Activated B cell treated with CpG ODN at 0.5 μM for 24 hours (primary cell): ENCODE measurements at regions of chr5 and their contacts with region 1.

Region 1: DNA sequence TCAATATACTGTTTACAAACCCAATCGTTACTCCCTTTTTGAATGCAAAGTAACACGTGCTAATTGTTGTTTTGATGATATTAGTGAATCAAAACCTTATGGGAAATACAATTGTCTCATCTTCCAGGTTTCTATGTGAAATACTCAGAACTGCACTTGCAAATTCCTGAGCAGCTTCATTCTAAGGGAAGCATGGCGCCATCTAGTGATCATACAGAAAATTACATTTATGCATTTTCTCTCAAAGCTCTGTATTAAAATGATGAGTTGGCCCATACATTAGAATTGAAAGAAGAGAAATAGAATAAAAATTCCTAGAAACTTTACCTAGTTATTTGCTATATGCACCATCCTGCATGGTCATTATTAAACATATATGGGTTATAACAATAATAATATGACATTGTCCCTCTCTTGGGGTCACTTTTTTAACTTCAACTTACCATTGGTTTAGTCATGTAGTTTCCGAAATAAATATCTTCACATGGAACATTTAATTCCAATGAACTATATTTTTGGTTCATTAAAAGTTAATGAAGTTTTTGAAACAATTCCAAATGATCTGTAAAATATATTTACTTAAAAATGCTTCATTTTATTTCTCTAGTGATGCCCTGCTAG is 220.0 kb downstream of the PDE4D start:
- DNase-seq: no peak
- ATAC-seq: peak; percentile 28
- H3K4me3 Mint-ChIP-seq: no peak overlapping the region
- H3K27ac Mint-ChIP-seq: no peak overlapping the region
- H3K4me1 Mint-ChIP-seq: peaks cover 10% of the 10 kb centered on the region
- H3K27me3 Mint-ChIP-seq: no peaks in the 10 kb centered on the region
- CTCF ChIP-seq: peak; percentile 75

Region 2: GRCh38 chr5:59390074-59390659 is 283.4 kb before region 1 on chr5:
- CTCF ChIA-PET with region 1: interaction called, 50 read pairs
- POLR2A ChIA-PET with region 1: no interaction called
- intact Hi-C with region 1: loop called (anchors 1 kb)
- DNase-seq: no peak
- ATAC-seq: no peak
- H3K4me3 Mint-ChIP-seq: no peak overlapping the region
- H3K27ac Mint-ChIP-seq: no peak overlapping the region
- H3K4me1 Mint-ChIP-seq: peaks cover 14% of the 10 kb centered on the region
- H3K27me3 Mint-ChIP-seq: no peaks in the 10 kb centered on the region
- CTCF ChIP-seq: peak; percentile 75

Region 3: DNA sequence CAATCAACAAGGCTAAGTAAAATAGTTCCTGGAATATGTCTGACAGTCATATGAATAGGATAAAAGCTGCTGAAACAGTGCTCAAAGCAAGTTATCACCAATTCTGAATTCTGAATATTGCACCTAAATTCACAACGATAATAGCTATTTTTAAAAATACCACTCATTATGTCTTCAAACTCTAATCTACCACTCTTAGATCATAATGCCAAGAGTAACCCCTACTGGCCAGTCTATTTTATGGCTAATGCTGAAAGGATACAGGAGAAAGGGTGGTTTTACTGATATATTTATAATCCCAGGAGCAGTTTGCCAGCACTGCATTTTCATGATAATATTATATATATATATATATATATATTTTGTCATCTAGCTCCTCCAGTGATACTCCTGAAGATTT is 12.8 kb before region 1 on chr5:
- CTCF ChIA-PET with region 1: interaction called, 29 read pairs
- POLR2A ChIA-PET with region 1: interaction called, 3 read pairs
- intact Hi-C with region 1: no loop called
- DNase-seq: no peak
- ATAC-seq: peak; percentile 40
- H3K4me3 Mint-ChIP-seq: no peak overlapping the region
- H3K27ac Mint-ChIP-seq: no peak overlapping the region
- H3K4me1 Mint-ChIP-seq: peaks cover 47% of the 10 kb centered on the region
- H3K27me3 Mint-ChIP-seq: no peaks in the 10 kb centered on the region
- CTCF ChIP-seq: no peak

Region 4: GRCh38 chr5:59724482-59725391 is 51.2 kb after region 1 on chr5:
- CTCF ChIA-PET with region 1: interaction called, 7 read pairs
- POLR2A ChIA-PET with region 1: no interaction called
- intact Hi-C with region 1: loop called (anchors 10 kb)
- DNase-seq: no peak
- ATAC-seq: peak; percentile 75
- H3K4me3 Mint-ChIP-seq: no peak overlapping the region
- H3K27ac Mint-ChIP-seq: no peak overlapping the region
- H3K4me1 Mint-ChIP-seq: peaks cover 13% of the 10 kb centered on the region
- H3K27me3 Mint-ChIP-seq: no peaks in the 10 kb centered on the region
- CTCF ChIP-seq: peak; percentile 38

Region 5: GRCh38 chr5:60533789-60534188 is 860.2 kb after region 1 on chr5:
- CTCF ChIA-PET with region 1: no interaction called
- POLR2A ChIA-PET with region 1: no interaction called
- intact Hi-C with region 1: no loop called
- DNase-seq: no peak
- ATAC-seq: no peak
- H3K4me3 Mint-ChIP-seq: no peak overlapping the region
- H3K27ac Mint-ChIP-seq: no peak overlapping the region
- H3K4me1 Mint-ChIP-seq: peaks cover 49% of the 10 kb centered on the region
- H3K27me3 Mint-ChIP-seq: no peaks in the 10 kb centered on the region
- CTCF ChIP-seq: no peak